A549 (cell line): ENCODE measurements at regions of chr9 and their contacts with region 1.

Region 1: DNA sequence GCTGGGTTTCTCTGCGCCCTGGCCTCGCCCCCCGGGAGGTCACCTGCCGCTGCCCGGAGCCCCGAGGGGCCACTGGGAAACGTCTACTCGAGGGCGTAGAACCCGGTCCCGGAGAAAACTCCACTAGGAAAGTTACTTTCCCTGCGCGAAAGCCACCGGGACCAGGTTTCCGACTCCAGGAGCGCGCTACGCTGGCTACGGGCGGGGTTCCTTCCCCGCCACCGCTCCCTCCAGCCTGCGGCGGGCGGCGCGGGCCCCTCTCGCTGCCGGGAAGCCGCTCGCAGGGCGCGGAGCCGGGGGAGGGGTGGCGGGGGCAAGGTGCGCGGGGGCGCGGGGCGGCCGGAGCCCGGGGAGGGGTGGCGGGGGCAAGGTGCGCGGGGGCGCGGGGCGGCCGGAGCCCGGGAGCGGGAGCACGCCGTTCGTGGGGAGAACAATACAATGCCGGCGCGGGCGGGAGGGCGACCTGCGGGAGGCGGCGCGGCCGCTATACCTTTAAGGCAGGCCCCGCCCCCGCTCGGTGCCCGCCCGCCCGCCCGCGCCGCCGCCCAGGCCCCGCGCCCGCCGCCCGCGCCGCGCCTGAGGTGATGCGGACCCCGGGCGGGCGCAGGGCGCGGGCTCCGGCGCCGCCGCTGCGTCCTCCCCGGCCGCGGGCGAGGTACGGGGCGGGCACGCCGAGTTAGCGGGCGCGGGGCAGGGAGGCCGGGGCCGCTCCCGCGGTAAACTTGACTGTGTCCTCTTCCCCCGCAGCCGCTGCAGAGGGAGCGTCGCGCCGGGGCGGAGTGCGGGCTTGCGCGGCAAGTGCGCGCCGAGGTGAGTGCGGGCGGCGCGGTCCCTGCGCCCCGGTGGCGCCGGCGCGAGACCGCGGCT is 278.1 kb downstream of the AOPEP start:
- DNase-seq: peak in 1 of 2 experiments; percentile 74
- ATAC-seq: peak; percentile 57 to 76
- H3K4me3 ChIP-seq: peak overlapping the region; percentile 87
- H3K27ac ChIP-seq: peak overlapping the region; percentile 99 to 100
- H3K4me1 ChIP-seq: peaks cover 44% of the 10 kb centered on the region
- CTCF ChIP-seq: no peak
- EP300 ChIP-seq: no peak; a peak in 1 of 5 replicates
- POLR2A ChIP-seq: peak; percentile 38; the same call in 1 of the 2 replicates
- RAD21 ChIP-seq: no peak; a peak in 1 of 5 replicates

Region 2: DNA sequence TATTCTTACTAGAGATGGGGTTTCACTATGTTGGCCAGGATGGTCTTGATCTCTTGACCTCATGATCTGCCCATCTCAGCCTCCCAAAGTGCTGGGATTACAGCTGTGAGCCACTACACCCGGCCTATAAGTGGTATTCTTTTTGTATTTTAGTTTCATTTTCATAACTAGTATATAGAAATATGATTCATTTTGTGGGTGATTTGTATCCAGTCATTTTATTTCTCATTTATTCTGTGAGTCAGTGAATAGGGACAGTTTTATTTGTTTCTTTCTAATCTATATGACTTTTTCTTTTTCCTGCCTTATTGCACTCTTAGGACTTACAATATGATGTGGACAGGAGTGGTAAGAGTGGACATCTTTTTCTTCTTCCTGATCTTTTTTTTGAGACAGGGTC is 165.2 kb before region 1 on chr9:
- CTCF ChIA-PET with region 1: no interaction called
- POLR2A ChIA-PET with region 1: no interaction called
- DNase-seq: no peak
- ATAC-seq: no peak
- H3K4me3 ChIP-seq: no peak overlapping the region
- H3K27ac ChIP-seq: no peak overlapping the region
- H3K4me1 ChIP-seq: no peaks in the 10 kb centered on the region
- CTCF ChIP-seq: no peak
- EP300 ChIP-seq: no peak
- POLR2A ChIP-seq: no peak
- RAD21 ChIP-seq: no peak

Region 3: GRCh38 chr9:94867281-94867841 is 137.3 kb before region 1 on chr9:
- CTCF ChIA-PET with region 1: interaction called, 4 read pairs
- POLR2A ChIA-PET with region 1: interaction called, 11 read pairs
- DNase-seq: peak; percentile 87 to 99
- ATAC-seq: peak; percentile 86 to 94
- H3K4me3 ChIP-seq: no peak overlapping the region
- H3K27ac ChIP-seq: peak overlapping the region; percentile 94 to 97
- H3K4me1 ChIP-seq: peaks cover 83% of the 10 kb centered on the region
- CTCF ChIP-seq: no peak
- EP300 ChIP-seq: peak; percentile 95 to 97
- POLR2A ChIP-seq: no peak
- RAD21 ChIP-seq: peak; percentile 60 to 70

Region 4: GRCh38 chr9:94922098-94922607 is 82.5 kb before region 1 on chr9:
- CTCF ChIA-PET with region 1: interaction called, 4 read pairs
- POLR2A ChIA-PET with region 1: interaction called, 63 read pairs
- DNase-seq: peak in 1 of 2 experiments; percentile 93
- ATAC-seq: peak; percentile 42 to 59; a peak in 5 of 6 replicates
- H3K4me3 ChIP-seq: peak overlapping the region; percentile 27
- H3K27ac ChIP-seq: peak overlapping the region; percentile 97 to 99
- H3K4me1 ChIP-seq: peaks cover 90% of the 10 kb centered on the region
- CTCF ChIP-seq: no peak
- EP300 ChIP-seq: peak; percentile 79 to 90; a peak in 3 of 5 replicates
- POLR2A ChIP-seq: no peak
- RAD21 ChIP-seq: peak; percentile 39 to 54; a peak in 3 of 5 replicates

Region 5: DNA sequence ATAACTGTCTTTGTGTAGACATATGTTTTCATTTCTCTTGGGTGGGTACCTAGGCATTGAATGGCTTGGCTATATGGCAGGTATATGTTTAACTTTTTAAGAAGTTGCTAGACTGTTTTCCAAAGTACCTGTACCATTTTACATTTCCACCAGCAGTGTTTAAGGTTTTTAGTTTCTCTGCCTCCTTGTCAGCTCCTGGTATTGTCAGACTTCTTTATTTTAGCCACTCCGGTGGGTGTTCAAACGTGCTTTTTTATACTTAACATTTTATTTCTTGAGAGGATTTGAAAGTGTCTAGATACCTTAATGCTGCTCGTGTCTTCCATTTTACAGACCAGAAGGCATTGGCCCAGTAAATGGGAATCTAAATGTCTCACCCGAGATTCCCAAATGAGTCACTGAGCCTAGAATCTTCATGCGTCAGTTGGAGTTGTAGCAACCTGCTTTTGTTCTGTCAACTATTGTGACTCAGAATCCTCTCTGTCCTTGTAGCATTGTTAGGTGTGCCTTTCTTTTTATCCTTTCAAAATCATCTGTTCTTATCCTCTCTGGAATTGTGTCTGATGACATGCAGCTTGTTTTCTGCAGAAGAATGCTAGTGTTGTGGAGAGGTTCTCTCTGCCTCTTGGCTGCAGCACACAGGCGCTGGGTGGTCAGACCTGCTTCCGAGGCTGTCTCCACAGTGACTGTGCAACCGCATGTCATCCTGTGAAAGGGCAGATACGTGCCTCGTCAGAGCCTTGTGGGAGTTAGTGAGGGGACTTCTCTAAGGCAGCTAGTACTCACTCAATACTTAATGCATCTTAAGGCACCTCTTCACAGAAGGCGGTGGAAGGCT is 13.7 kb after region 1 on chr9:
- CTCF ChIA-PET with region 1: interaction called, 8 read pairs
- POLR2A ChIA-PET with region 1: interaction called, 11 read pairs
- DNase-seq: peak; percentile 65 to 87
- ATAC-seq: peak; percentile 65 to 80
- H3K4me3 ChIP-seq: peak overlapping the region; percentile 22; the same call in 2 of the 3 replicates
- H3K27ac ChIP-seq: peak overlapping the region; percentile 86 to 99
- H3K4me1 ChIP-seq: peaks cover 99% of the 10 kb centered on the region
- CTCF ChIP-seq: no peak
- EP300 ChIP-seq: peak; percentile 22 to 54; a peak in 2 of 5 replicates
- POLR2A ChIP-seq: peak; percentile 17; the same call in 1 of the 2 replicates
- RAD21 ChIP-seq: 0 out of 5 replicates have a peak, but pooled peaks of 1 of the 2 experiments have one; percentile 15

Region 6: GRCh38 chr9:95048225-95049087 is 43.8 kb after region 1 on chr9:
- CTCF ChIA-PET with region 1: interaction called, 14 read pairs
- POLR2A ChIA-PET with region 1: interaction called, 10 read pairs
- DNase-seq: peak in 1 of 2 experiments; percentile 74
- ATAC-seq: peak; percentile 47 to 67
- H3K4me3 ChIP-seq: peak overlapping the region; percentile 57
- H3K27ac ChIP-seq: peak overlapping the region; percentile 84 to 87
- H3K4me1 ChIP-seq: peaks cover 59% of the 10 kb centered on the region
- CTCF ChIP-seq: no peak
- EP300 ChIP-seq: no peak
- POLR2A ChIP-seq: peak; percentile 53
- RAD21 ChIP-seq: no peak